Head of caudate nucleus (tissue), 42 donors: ENCODE measurements at regions of chr6 and their contacts with region 1.

Region 1: GRCh38 chr6:42661540-42662153 is 60.8 kb downstream of the PRPH2 start:
- DNase-seq: peak; percentile 40 to 94 (median 82)

Region 2: GRCh38 chr6:42864602-42865001 is 203.0 kb after region 1 on chr6:
- intact Hi-C with region 1: no loop called
- DNase-seq: peak in 2 of 42 donors; percentile 43 to 50

Region 3: GRCh38 chr6:42879372-42880239 is 218.0 kb after region 1 on chr6 and contains the start of gene RPL7L1:
- intact Hi-C with region 1: loop called (anchors 5 kb)
- DNase-seq: peak; percentile 83 to 95 (median 90)